CD4-positive, alpha-beta memory T cell (primary cell): ENCODE measurements at regions of chrX and their contacts with region 1.

Region 1: GRCh38 chrX:79336869-79337815 is 30.0 kb downstream of the ITM2A start:
- DNase-seq: peak in 4 of 5 donors; percentile 28 to 54 (median 43)
- H3K4me3 ChIP-seq: peak overlapping the region; percentile 22 to 28
- H3K4me3 Mint-ChIP-seq: peak overlapping the region; percentile 40 to 88 (median 81)
- H3K27ac ChIP-seq: peak overlapping the region; percentile 43
- H3K27ac Mint-ChIP-seq: peak overlapping the region; percentile 85 to 97 (median 92)
- H3K4me1 ChIP-seq: peaks cover 18% of the 10 kb centered on the region
- H3K4me1 Mint-ChIP-seq: peaks cover 4 to 16% (median 10%) of the 10 kb centered on the region in 4 donors
- H3K27me3 ChIP-seq: no peaks in the 10 kb centered on the region
- H3K27me3 Mint-ChIP-seq: no peaks in the 10 kb centered on the region

Region 2: DNA sequence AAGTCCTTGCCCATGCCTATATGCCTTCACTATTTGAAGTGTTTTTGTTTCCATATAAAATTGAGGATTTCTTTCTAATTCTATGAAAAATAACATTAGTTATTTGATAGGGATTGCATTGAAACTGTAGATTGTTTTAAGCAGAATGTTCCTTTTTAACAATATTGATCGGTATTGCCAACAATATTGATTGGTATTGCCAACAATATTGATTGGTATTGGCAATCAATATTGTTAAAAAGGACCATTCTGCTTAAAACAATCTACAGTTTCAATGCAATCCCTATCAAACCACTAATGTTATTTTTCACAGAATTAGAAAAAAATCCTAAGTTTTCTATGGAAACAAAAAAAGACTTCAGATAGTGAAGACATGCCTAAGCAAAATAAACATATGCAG is 215.1 kb before region 1 on chrX:
- CTCF ChIA-PET with region 1: no interaction called
- POLR2A ChIA-PET with region 1: no interaction called
- intact Hi-C with region 1: no loop called
- DNase-seq: no peak
- H3K4me3 ChIP-seq: no peak overlapping the region
- H3K4me3 Mint-ChIP-seq: no peak overlapping the region
- H3K27ac ChIP-seq: no peak overlapping the region
- H3K27ac Mint-ChIP-seq: no peak overlapping the region
- H3K4me1 ChIP-seq: peaks cover 7% of the 10 kb centered on the region
- H3K4me1 Mint-ChIP-seq: peaks cover 3 to 21% (median 14%) of the 10 kb centered on the region in 4 donors
- H3K27me3 ChIP-seq: no peaks in the 10 kb centered on the region
- H3K27me3 Mint-ChIP-seq: no peaks in the 10 kb centered on the region

Region 3: GRCh38 chrX:79153348-79153747 is 183.8 kb before region 1 on chrX:
- CTCF ChIA-PET with region 1: no interaction called
- POLR2A ChIA-PET with region 1: no interaction called
- intact Hi-C with region 1: no loop called
- DNase-seq: no peak
- H3K4me3 ChIP-seq: peak overlapping the region; percentile 34 to 42
- H3K4me3 Mint-ChIP-seq: peak overlapping the region; percentile 57 to 93 (median 84)
- H3K27ac ChIP-seq: peak overlapping the region; percentile 71
- H3K27ac Mint-ChIP-seq: peak overlapping the region; percentile 83 to 97 (median 93)
- H3K4me1 ChIP-seq: peaks cover 94% of the 10 kb centered on the region
- H3K4me1 Mint-ChIP-seq: peaks cover 34 to 81% (median 42%) of the 10 kb centered on the region in 4 donors
- H3K27me3 ChIP-seq: no peaks in the 10 kb centered on the region
- H3K27me3 Mint-ChIP-seq: no peaks in the 10 kb centered on the region

Region 4: GRCh38 chrX:79325263-79325958 is 11.7 kb before region 1 on chrX:
- CTCF ChIA-PET with region 1: interaction called, 3 read pairs
- POLR2A ChIA-PET with region 1: interaction called, 4 read pairs
- intact Hi-C with region 1: loop called (anchors 1 kb)
- DNase-seq: peak; percentile 50 to 65 (median 62)
- H3K4me3 ChIP-seq: peak overlapping the region in 1 of 2 donors; percentile 9
- H3K4me3 Mint-ChIP-seq: peak overlapping the region; percentile 79 to 92 (median 86)
- H3K27ac ChIP-seq: peak overlapping the region; percentile 42
- H3K27ac Mint-ChIP-seq: peak overlapping the region; percentile 87 to 97 (median 95)
- H3K4me1 ChIP-seq: peaks cover 11% of the 10 kb centered on the region
- H3K4me1 Mint-ChIP-seq: peaks cover 14 to 27% (median 21%) of the 10 kb centered on the region in 4 donors
- H3K27me3 ChIP-seq: no peaks in the 10 kb centered on the region
- H3K27me3 Mint-ChIP-seq: no peaks in the 10 kb centered on the region

Region 5: DNA sequence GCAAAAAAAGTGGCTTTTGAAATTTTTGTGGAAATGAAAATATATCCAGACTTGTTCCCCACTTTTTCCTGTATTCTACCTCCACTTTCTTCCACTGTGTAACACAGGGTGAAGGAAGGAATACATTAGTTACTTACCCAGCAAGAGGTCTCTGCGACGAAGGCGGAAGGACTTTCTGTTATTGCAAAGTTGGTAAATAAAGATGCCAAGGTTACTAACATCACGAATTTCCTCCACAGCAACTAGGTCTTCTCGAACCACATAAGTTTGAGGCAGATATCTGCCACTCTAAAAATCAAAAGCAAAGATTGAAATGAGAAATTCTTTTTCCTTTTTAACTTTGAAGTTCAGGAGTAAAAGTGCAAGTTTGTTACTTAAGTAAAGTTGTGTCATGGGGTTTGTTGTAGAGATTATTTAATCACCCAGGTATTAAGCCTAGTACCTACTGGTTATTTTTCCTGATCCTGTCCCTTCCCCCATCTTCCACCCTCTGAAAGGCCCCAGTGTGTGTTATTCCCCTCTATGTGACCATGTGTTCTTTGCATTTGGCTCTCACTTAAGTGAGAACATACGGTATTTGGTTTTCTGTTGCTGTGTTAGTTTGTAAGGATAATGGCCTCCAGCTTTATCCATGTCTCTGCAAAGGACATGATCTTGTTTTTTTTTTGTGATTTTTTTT is 24.2 kb after region 1 on chrX:
- CTCF ChIA-PET with region 1: no interaction called
- POLR2A ChIA-PET with region 1: interaction called, 9 read pairs
- intact Hi-C with region 1: loop called (anchors 1 kb)
- DNase-seq: peak; percentile 38 to 66 (median 48)
- H3K4me3 ChIP-seq: no peak overlapping the region
- H3K4me3 Mint-ChIP-seq: peak overlapping the region in 7 of 8 donors; percentile 23 to 61 (median 44)
- H3K27ac ChIP-seq: peak overlapping the region; percentile 46
- H3K27ac Mint-ChIP-seq: peak overlapping the region; percentile 67 to 97 (median 86)
- H3K4me1 ChIP-seq: peaks cover 32% of the 10 kb centered on the region
- H3K4me1 Mint-ChIP-seq: peaks cover 16 to 29% (median 22%) of the 10 kb centered on the region in 4 donors
- H3K27me3 ChIP-seq: no peaks in the 10 kb centered on the region
- H3K27me3 Mint-ChIP-seq: no peaks in the 10 kb centered on the region

Region 6: DNA sequence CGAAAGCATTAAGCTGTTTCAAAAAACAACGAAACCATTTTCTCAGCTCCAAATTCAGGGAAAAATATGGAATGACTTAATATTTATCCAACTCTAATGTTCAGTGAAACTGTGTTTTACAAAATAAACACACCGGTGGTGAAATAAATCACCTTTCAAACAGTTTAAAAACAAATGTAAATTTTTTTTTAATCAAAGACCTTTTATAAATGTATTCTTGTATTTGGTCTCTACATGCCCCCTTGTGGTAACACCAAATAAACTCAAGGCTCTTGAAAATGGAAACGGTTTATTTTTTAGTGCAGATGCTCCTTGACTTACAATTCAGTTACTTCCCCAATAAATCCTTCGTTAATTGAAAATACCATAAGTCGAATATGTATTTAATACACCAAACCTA is 75.8 kb after region 1 on chrX:
- CTCF ChIA-PET with region 1: no interaction called
- POLR2A ChIA-PET with region 1: no interaction called
- intact Hi-C with region 1: loop called (anchors 5 kb)
- DNase-seq: peak in 4 of 5 donors; percentile 48 to 54 (median 50)
- H3K4me3 ChIP-seq: peak overlapping the region; percentile 23 to 34
- H3K4me3 Mint-ChIP-seq: peak overlapping the region; percentile 71 to 84 (median 82)
- H3K27ac ChIP-seq: peak overlapping the region; percentile 56
- H3K27ac Mint-ChIP-seq: peak overlapping the region; percentile 41 to 88 (median 82)
- H3K4me1 ChIP-seq: peaks cover 7% of the 10 kb centered on the region
- H3K4me1 Mint-ChIP-seq: peaks cover 18 to 35% (median 22%) of the 10 kb centered on the region in 4 donors
- H3K27me3 ChIP-seq: no peaks in the 10 kb centered on the region
- H3K27me3 Mint-ChIP-seq: no peaks in the 10 kb centered on the region